Motor neuron (in vitro differentiated cells): ENCODE measurements at regions of chr15 and their contacts with region 1.

Region 1: DNA sequence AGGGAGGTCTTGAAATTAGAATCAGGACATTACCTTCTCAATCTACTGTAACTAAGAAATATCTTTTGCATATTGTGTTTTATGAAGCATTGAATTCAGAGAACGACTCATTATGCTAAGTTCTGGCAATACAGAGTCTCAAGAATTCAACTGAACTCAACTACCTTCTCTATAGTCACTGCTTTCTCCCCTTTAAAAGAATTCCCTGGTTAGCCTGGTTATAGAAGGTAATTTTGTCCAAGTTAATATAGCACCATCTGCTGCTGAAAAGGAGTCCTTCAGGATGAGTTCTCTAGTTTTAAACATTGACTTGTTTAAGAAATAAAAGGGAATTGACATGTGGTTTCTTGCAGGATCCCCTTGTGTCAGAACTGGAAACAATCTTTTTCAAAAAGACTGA is 60.2 kb downstream of the IL16 start:
- ATAC-seq: peak in 3 of 8 experiments; percentile 25 to 50 (median 42)
- H3K4me3 ChIP-seq: no peak overlapping the region
- H3K27ac ChIP-seq: no peak overlapping the region
- H3K4me1 ChIP-seq: no peaks in the 10 kb centered on the region

Region 2: DNA sequence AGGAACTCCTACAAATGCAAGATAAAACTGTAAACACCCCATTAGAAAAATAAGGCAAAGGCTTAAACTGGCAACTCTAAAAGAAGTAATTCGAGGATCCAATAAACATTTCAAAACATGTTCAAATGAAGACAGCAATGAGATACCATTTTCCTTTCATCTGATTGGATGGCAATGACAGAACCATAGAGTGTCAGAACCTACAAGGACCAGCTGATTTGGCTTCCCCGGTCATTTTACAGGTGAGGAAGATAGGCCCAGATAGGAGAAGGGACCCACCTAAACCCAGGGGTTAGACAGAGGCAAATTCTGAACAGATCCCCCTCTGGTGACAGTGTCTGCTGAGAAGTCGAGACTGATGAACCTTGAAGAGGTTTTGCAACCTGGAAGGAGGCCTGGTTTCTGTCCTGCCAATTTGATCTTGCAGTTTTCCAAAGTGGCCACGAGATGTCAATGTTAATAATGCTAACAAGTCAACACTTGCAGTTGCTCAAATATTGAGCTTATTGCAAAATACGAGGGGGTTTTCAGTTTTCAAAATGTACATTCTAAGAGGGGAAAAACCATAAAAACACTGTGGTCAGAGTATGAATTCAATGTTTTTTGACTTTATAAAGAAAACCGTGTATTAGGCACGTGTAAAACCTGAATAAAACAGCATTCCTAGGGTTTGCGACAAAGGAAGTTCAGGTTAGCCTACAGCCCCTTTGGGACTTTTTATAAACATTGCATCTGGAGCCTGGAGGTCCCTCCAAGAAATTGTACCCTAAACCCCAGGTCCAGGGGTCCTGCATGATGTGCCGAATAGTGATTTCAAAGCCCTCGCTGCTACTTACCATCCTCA is 101.3 kb before region 1 on chr15:
- in situ Hi-C with region 1: loop called in 4 of 9 experiments (anchors 10 to 25 kb)
- ATAC-seq: peak in 2 of 8 experiments; percentile 29 to 44
- H3K4me3 ChIP-seq: no peak overlapping the region
- H3K27ac ChIP-seq: no peak overlapping the region
- H3K4me1 ChIP-seq: no peaks in the 10 kb centered on the region

Region 3: DNA sequence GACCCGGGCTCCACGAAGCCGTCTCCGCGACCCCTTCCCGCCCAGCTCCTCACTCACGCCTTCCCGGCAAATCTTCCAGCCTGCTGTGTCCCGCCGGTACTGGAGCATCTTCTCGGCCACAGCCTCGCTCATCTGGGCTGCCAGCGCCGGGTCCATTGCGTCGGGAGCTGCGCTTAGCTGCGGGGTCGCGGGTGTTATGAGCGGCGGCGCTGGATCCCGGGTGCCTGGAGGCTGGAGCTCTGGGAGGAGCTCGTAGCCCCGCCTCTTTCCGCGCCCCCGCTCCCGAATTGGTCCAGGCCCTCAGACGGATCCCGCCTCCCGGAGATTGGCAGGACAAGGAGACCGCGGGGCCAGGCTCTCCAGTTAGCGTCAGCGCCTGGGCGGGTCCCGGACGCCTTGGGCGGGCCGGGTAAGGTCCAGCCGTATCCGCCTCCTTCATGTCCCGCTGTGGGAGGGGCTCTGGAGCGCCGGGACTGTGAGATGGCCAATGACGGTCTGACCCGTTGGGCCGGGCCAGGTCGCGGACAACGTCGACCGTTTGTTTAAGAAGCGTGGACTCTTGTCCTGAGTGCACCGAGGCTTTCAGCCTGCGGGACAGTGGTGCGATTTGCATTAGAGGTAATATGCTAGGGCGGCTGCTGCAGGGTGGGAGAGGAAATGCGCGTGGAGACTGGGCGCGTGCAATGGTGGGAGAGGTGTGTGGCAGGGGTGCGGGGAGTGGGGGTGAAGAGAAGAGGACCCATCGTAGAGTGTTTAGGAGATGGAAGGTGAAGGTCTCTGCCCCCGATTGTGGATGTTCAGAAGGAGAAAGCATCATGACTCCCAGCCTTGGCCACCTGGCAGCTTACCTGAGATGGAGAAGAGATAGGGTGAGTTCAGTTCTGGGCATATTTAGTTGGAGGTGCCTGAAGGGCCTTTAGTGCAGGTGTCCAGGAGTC is 67.3 kb after region 1 on chr15 and contains the start of gene STARD5:
- in situ Hi-C with region 1: no loop called
- ATAC-seq: peak; percentile 98 to 100 (median 99)
- H3K4me3 ChIP-seq: peak within 1 kb of the TSS; percentile 55 to 79 (median 64)
- H3K27ac ChIP-seq: peak within 1 kb of the TSS; percentile 22 to 50
- H3K4me1 ChIP-seq: no peaks in the 10 kb centered on the region
- total RNA-seq, gene STARD5: 0.92 to 9.7 (median 2.1) TPM

Region 4: GRCh38 chr15:81859737-81860516 is 603.0 kb after region 1 on chr15:
- in situ Hi-C with region 1: no loop called
- ATAC-seq: no peak
- H3K4me3 ChIP-seq: no peak overlapping the region
- H3K27ac ChIP-seq: no peak overlapping the region
- H3K4me1 ChIP-seq: peaks cover 0 to 3% of the 10 kb centered on the region in 2 donors